PC-3 (cell line): ENCODE measurements at regions of chr21 and their contacts with region 1.

Region 1: DNA sequence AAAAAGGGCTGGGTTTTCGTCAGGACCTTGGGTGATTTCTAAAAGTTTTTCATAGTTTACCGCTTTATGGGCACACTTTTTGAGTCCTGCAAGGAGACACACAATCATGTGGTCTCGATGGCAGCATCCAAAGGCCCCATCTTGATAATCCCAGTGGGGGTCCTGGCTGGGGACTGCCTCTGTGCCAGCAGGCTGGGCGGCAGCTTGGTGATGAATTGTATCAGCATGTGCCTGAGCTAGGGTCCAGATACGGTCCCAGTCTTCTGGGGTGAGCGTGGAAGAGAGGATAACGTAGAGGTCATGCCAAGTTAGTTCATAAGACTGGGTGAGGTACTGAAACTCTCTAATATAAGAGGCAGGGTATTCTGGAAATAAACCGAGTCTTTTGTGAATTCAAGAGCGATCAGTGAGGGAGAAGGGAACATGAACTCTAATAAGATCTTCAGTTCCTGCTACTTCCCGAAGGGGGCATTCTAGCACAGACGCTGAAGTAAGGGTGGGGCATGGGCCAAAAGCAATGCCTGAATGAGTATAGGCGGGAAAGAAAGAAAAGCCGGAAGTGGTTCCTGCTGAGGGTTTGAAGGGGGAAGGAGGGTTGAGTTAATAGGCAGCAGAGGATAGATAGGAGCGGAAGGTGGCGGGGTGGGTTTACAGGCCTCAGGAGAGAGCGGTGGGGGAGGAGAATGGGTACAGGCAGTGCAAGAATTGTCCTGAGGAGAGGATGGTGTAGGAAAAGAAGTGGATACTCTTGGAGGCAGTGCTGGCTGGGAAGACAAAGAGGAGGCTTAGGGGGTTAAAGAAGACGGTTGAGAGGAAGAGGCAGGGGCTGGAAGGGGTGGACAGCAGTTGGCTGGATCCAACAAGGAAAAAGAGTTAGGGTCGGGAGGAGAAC is 1.6 kb downstream of the ERVH48-1 start:
- DNase-seq: peak; percentile 96
- ATAC-seq: peak; percentile 95
- H3K4me3 ChIP-seq: no peak overlapping the region
- H3K27ac ChIP-seq: no peak overlapping the region
- H3K4me1 ChIP-seq: peaks cover 8% of the 10 kb centered on the region
- H3K27me3 ChIP-seq: no peaks in the 10 kb centered on the region
- CTCF ChIP-seq: peak; percentile 88

Region 2: DNA sequence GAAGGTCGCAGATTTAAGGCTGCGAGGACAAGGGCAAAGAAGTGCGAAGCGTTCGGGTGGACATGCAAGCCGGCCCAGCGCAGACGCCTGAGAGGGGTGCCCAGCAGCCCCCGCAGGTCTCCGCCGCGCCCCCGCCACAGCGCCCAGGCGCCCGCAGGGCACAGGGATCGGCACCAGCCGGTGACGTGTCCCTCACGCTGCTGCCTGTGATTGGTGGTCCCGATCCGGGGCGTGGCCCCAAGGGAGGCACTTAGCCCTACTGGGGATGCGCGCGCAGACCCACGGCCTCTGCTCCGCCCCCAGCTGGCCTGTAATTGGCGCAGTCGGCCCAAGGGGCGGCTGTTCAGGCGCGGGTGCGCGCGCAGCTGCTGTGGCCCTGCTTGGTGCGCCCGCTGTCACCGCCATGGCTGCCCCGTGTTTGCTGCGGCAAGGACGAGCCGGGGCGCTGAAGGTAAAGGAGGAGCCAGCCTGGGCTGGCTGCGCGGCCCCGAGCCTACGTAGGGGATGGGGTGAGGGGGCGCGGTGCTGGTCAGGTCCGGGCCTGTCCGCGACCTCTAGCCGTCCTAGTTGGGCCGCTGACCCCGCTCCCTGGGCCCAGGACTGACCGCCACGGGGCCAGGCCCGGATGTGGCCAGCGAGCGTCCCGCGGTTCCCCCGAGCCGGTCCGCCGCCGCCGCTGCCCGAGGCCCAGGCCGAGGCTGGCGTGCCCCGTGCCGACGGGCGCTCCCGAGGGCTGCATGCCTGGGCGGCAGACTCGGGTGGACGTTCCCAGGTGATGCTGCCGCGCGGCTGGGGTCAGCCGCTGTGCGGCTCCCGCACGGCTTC is 30.6 kb before region 1 on chr21 and contains the start of gene NDUFV3:
- CTCF ChIA-PET with region 1: no interaction called
- POLR2A ChIA-PET with region 1: no interaction called
- intact Hi-C with region 1: loop called (anchors 1 kb)
- DNase-seq: peak; percentile 99
- ATAC-seq: peak; percentile 93
- H3K4me3 ChIP-seq: peak within 1 kb of the TSS; percentile 99
- H3K27ac ChIP-seq: peak within 1 kb of the TSS; percentile 75
- H3K4me1 ChIP-seq: peaks cover 7% of the 10 kb centered on the region
- H3K27me3 ChIP-seq: no peaks in the 10 kb centered on the region
- CTCF ChIP-seq: no peak
- total RNA-seq, gene NDUFV3: 61.6 and 65.8 TPM in 2 replicates

Region 3: DNA sequence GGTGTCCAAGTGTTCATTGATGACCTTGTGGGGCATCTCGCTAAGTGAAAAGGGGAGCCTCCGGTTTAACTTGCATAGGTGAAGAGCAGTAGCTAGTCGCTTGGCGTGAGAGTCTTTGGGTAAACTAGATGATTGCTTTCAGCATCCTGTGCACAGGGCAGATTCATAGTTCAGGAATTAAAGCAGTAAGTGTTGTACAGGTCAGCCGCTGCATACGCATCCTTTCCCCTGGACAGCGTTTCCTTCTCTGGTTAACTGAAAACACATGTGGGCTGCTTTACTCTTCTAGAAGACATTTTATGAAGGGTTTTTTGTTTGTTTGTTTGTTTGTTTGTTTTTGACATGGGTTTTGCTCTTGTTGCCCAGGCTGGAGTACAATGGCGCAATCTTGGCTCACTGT is 18.6 kb before region 1 on chr21:
- CTCF ChIA-PET with region 1: no interaction called
- POLR2A ChIA-PET with region 1: no interaction called
- intact Hi-C with region 1: no loop called
- DNase-seq: no peak
- ATAC-seq: no peak
- H3K4me3 ChIP-seq: no peak overlapping the region
- H3K27ac ChIP-seq: no peak overlapping the region
- H3K4me1 ChIP-seq: no peaks in the 10 kb centered on the region
- H3K27me3 ChIP-seq: no peaks in the 10 kb centered on the region
- CTCF ChIP-seq: no peak

Region 4: GRCh38 chr21:42991992-42992740 is 68.4 kb after region 1 on chr21:
- CTCF ChIA-PET with region 1: no interaction called
- POLR2A ChIA-PET with region 1: no interaction called
- intact Hi-C with region 1: no loop called
- DNase-seq: peak; percentile 60
- ATAC-seq: peak; percentile 78
- H3K4me3 ChIP-seq: no peak overlapping the region
- H3K27ac ChIP-seq: no peak overlapping the region
- H3K4me1 ChIP-seq: no peaks in the 10 kb centered on the region
- H3K27me3 ChIP-seq: no peaks in the 10 kb centered on the region
- CTCF ChIP-seq: no peak